ENCODE measurements at regions of chr13 and their contacts with region 1.

Region 1: DNA sequence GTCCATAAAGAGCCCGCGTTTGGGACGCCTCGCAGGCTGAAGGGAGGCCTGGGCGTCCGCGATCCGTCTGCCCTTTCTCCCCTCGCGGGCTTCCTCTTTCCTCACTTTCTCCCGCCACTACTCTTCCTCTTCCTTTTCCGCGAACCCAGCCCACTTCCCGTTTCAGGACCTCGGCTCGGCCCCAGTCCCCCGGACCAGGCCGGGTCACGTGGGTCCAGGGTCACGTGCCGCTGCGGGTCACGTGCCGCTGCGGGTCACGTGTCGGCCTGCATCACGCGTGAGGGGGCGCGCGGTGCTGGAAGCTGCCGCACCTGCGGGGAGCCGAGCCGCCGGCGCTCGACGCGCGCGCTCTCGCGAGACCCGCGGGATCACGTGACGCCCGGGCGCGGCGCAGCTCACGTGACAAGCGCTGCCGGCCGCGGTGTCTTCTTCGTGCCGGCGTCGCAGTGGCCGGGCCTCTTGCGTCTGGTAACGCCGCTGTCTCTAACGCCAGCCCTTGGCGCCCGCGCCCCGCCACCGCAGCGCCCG is at the start of gene LAMP1:
- DNase-seq: peak; percentile 91
- ATAC-seq: peak; percentile 90
- H3K4me3 ChIP-seq: peak within 1 kb of the TSS; percentile 92 to 98
- H3K27ac ChIP-seq: peak within 1 kb of the TSS; percentile 74
- H3K4me1 ChIP-seq: peaks cover 8 to 27% of the 10 kb centered on the region in 2 experiments; a peak in 3 of 4 replicates
- H3K27me3 ChIP-seq: peaks cover 8% of the 10 kb centered on the region; the same call in 1 of the 2 replicates
- CTCF ChIP-seq: no peak
- POLR2A ChIP-seq: no peak
- RAD21 ChIP-seq: no peak
- total RNA-seq, gene LAMP1: 158 TPM

Region 2: DNA sequence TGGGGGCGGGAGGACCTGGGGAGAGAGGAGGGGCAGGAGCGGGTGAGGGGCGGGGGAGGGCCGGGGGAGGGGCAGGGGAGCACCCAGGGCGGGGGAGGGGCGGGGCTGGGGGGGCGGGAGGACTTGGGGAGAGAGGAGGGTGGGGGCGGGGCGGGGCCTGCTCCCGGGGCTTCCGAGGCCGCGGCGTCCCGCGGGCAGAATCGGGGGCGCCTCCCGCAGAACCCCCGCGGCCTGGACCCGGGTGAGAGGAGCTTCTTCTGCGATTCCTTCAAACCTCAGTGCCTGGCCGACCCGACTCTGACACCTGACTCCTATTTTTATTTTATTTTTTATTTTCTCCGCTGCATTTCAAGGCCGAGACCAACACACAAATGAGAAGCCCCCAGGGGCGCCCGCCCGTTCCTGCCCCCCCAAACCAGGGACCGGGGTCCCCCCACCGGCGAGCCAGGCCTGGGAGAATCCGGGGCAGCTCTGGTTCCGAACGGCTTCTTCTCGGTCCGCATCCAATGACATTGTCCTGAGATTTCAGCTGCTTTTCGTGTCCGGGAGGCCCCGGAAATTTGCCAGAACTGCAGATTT is 67.5 kb after region 1 on chr13:
- CTCF ChIA-PET with region 1: no interaction called
- POLR2A ChIA-PET with region 1: no interaction called
- RAD21 ChIA-PET with region 1: no interaction called
- intact Hi-C with region 1: loop called (anchors 5 kb)
- DNase-seq: no peak
- ATAC-seq: no peak
- H3K4me3 ChIP-seq: 0 out of 4 replicates have a peak overlapping the region, but pooled peaks of 1 of the 2 experiments have one; percentile 9
- H3K27ac ChIP-seq: peak overlapping the region; percentile 40
- H3K4me1 ChIP-seq: peaks cover 10 to 14% of the 10 kb centered on the region in 2 experiments
- H3K27me3 ChIP-seq: no peaks in the 10 kb centered on the region
- CTCF ChIP-seq: no peak
- POLR2A ChIP-seq: no peak
- RAD21 ChIP-seq: no peak

Region 3: GRCh38 chr13:113458253-113459065 is 161.6 kb after region 1 on chr13:
- CTCF ChIA-PET with region 1: no interaction called
- POLR2A ChIA-PET with region 1: no interaction called
- RAD21 ChIA-PET with region 1: no interaction called
- intact Hi-C with region 1: no loop called
- DNase-seq: no peak
- ATAC-seq: peak; percentile 69
- H3K4me3 ChIP-seq: no peak overlapping the region
- H3K27ac ChIP-seq: no peak overlapping the region
- H3K4me1 ChIP-seq: no peaks in the 10 kb centered on the region
- H3K27me3 ChIP-seq: no peaks in the 10 kb centered on the region
- CTCF ChIP-seq: peak in 2 of 3 experiments; percentile 48 to 60; a peak in 4 of 6 replicates
- POLR2A ChIP-seq: no peak
- RAD21 ChIP-seq: no peak

Measured in HCT116 (cell line).